Natural killer cell (primary cell): ENCODE measurements at regions of chr2 and their contacts with region 1.

Region 1: DNA sequence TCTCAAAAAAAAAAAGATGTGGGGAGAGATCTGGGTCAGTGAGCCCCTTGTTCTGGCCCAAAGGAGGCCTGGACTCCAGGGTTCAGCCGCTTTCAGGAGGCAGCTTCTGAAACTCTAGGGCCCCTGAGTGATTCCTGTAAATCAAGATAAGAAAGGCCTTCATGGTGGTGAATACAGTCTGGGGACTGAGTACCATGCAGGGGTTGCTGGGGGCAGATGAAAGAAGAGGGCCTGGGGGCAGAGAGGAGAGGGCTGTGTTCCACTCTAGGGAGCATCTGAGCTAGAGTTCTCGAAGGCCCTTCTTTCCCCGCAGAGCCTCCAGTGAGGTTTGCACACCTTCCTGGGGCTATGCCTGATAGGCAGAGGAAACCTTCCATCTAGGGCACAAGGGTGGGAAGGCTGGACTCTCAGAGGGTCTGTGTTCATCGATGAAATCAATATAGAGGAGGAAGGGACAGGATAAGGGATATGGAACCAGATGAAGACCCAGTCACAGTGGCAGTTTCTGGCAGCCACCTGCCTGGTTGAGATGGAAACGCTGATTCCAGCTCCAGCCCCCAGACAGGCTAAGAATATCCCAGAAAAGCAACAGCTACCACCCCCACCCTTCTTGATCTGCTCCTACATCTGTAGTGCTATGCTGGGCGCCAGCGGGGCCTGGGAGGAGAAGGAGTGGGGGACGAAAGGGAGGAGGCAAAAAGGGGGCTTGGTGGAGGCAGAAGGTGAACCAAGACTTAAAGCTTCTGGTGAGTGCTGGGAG is 4.7 kb upstream of the CDK5R2 start:
- DNase-seq: no peak
- ATAC-seq: no peak
- H3K4me3 ChIP-seq: no peak overlapping the region
- H3K4me3 Mint-ChIP-seq: no peak overlapping the region
- H3K27ac ChIP-seq: no peak overlapping the region
- H3K27ac Mint-ChIP-seq: no peak overlapping the region
- H3K4me1 ChIP-seq: peaks cover 4% of the 10 kb centered on the region
- H3K4me1 Mint-ChIP-seq: no peaks in the 10 kb centered on the region
- H3K27me3 ChIP-seq: peaks cover 12% of the 10 kb centered on the region
- H3K27me3 Mint-ChIP-seq: peaks cover 57 to 60% of the 10 kb centered on the region in 2 donors
- CTCF ChIP-seq: no peak

Region 2: DNA sequence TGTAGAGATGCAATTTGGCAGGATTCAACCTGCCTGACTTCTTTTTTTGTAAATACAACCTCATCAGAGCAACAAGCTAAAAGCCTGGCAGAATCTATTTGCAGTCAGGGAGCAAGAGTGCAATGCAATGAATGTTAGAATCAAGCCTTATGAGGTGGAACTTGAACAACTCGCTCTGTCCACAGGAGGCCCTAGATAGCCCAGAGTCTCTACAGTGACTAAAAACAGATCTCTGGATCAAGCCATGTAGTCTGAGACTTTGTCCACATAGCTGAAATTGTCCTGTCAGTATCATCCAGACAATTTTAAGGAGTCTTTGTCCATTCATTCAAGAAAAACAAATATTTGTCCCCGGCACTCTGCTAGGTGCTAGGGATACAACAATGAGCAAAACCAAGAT is 27.3 kb before region 1 on chr2:
- intact Hi-C with region 1: loop called (anchors 1 kb)
- DNase-seq: no peak
- ATAC-seq: no peak
- H3K4me3 ChIP-seq: no peak overlapping the region
- H3K4me3 Mint-ChIP-seq: no peak overlapping the region
- H3K27ac ChIP-seq: no peak overlapping the region
- H3K27ac Mint-ChIP-seq: no peak overlapping the region
- H3K4me1 ChIP-seq: no peaks in the 10 kb centered on the region
- H3K4me1 Mint-ChIP-seq: no peaks in the 10 kb centered on the region
- H3K27me3 ChIP-seq: peaks cover 5% of the 10 kb centered on the region
- H3K27me3 Mint-ChIP-seq: peaks cover 32 to 58% of the 10 kb centered on the region in 2 donors
- CTCF ChIP-seq: no peak

Region 3: GRCh38 chr2:219186754-219187456 is 232.2 kb after region 1 on chr2:
- intact Hi-C with region 1: no loop called
- DNase-seq: no peak
- ATAC-seq: no peak
- H3K4me3 ChIP-seq: no peak overlapping the region
- H3K4me3 Mint-ChIP-seq: no peak overlapping the region
- H3K27ac ChIP-seq: no peak overlapping the region
- H3K27ac Mint-ChIP-seq: no peak overlapping the region
- H3K4me1 ChIP-seq: no peaks in the 10 kb centered on the region
- H3K4me1 Mint-ChIP-seq: peaks cover 0 to 7% of the 10 kb centered on the region in 2 donors
- H3K27me3 ChIP-seq: no peaks in the 10 kb centered on the region
- H3K27me3 Mint-ChIP-seq: no peaks in the 10 kb centered on the region
- CTCF ChIP-seq: no peak